Mammary epithelial cell (primary cell): ENCODE measurements at regions of chr9 and their contacts with region 1.

Region 1: DNA sequence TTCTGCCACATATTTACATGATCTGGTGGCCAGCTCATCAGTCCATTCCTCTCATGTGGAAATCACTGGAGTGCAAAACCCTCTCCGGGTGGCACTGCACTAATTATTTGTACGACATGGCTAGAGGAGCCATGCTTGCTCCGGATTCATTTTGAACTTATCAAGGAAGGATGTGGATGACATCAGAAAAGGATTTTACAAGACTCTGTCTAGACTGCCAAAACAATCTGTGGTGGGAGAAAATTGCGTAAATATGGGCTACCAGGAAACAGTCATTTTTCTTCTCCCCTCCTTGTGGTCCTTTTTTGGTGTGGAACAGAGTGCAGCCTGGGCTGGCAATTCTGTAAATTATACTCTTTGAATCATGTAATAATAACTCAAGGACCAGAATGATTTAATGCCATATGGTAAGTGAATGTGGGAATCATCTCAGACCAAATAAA is 123.4 kb upstream of the IFNE start:
- DNase-seq: peak; percentile 37
- H3K4me3 ChIP-seq: no peak overlapping the region
- H3K27ac ChIP-seq: no peak overlapping the region
- H3K4me1 ChIP-seq: peaks cover under 1% of the 10 kb centered on the region
- H3K27me3 ChIP-seq: no peaks in the 10 kb centered on the region
- CTCF ChIP-seq: no peak

Region 2: GRCh38 chr9:21591221-21592062 is 14.1 kb before region 1 on chr9:
- CTCF ChIA-PET with region 1: no interaction called
- dilution Hi-C with region 1: no loop called
- in situ Hi-C with region 1: no loop called
- intact Hi-C with region 1: loop called (anchors 1 kb)
- DNase-seq: peak; percentile 97
- H3K4me3 ChIP-seq: peak overlapping the region; percentile 39 to 77 (median 57)
- H3K27ac ChIP-seq: peak overlapping the region; percentile 97
- H3K4me1 ChIP-seq: peaks cover 18% of the 10 kb centered on the region
- H3K27me3 ChIP-seq: no peaks in the 10 kb centered on the region
- CTCF ChIP-seq: no peak

Region 3: DNA sequence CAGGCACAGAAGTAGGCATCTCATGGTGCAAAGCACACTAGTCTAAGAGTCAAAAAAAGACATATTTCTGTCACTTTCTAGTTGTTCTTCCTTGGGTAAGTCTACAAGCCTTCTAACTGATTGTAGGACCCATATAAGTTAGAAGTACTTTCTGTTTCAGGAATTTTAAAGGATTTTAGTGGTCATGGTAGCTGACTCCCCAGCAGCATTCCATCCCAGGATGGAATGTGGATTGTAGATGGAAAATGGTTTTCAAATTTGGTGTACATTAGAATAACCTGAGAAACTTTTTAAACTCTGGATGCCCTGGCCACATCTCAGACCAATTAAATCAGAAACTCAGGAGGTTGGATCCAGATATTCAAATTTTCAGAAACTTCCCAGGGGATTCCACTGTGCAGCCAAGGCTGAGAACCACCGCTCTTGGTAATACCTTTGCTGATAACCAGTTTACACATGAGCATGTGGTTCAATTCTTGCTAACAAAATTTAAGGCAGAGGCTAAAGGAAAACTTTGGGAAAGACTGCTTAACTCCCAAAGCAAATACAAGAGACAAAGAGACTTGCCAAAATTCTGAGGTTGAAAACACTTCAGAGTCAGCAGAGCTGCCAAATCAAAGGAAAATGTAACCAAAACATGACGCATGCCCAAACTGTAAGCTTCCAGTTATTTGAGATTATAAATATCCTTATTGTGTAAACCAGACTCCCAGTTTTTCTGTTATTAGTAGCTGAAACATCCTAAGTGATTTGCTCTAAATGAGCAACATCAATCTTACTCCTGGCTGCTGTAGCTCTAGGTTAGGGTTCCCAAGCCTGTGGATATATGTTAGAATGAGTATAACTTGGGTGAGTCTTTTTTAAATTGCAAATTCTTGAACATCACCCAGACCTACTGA is 51.5 kb after region 1 on chr9:
- CTCF ChIA-PET with region 1: no interaction called
- dilution Hi-C with region 1: loop called (anchors 5 kb)
- in situ Hi-C with region 1: no loop called
- intact Hi-C with region 1: no loop called
- DNase-seq: peak; percentile 70
- H3K4me3 ChIP-seq: no peak overlapping the region
- H3K27ac ChIP-seq: no peak overlapping the region
- H3K4me1 ChIP-seq: no peaks in the 10 kb centered on the region
- H3K27me3 ChIP-seq: no peaks in the 10 kb centered on the region
- CTCF ChIP-seq: no peak